ENCODE measurements at regions of chr13 and their contacts with region 1.

Region 1: GRCh38 chr13:41678249-41678648 is 220.9 kb downstream of the RGCC start:
- DNase-seq: no peak
- H3K4me3 Mint-ChIP-seq: no peak overlapping the region
- H3K27ac Mint-ChIP-seq: no peak overlapping the region
- H3K4me1 Mint-ChIP-seq: no peaks in the 10 kb centered on the region
- H3K27me3 Mint-ChIP-seq: no peaks in the 10 kb centered on the region

Region 2: DNA sequence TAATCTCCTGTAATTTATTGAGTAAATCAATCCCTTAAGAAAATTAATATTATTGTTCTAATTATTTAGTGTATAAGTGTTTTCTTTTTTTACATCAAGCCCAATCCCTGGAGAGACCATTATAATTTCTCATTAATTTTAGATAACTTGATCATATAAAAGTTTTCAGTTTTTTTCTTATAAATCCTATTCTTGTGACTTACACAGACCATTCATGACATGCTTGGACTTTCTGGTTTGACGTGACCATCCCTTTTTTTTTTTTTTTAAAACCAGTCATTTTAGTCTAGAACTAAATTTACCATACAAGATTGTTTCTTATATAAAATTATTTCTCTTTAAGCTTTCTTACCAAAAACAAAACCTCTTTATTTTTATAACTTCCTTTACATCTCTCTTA is 409.5 kb before region 1 on chr13:
- CTCF ChIA-PET with region 1: no interaction called
- POLR2A ChIA-PET with region 1: no interaction called
- DNase-seq: peak; percentile 50
- H3K4me3 Mint-ChIP-seq: no peak overlapping the region
- H3K27ac Mint-ChIP-seq: no peak overlapping the region
- H3K4me1 Mint-ChIP-seq: peaks cover 14% of the 10 kb centered on the region
- H3K27me3 Mint-ChIP-seq: no peaks in the 10 kb centered on the region

Region 3: DNA sequence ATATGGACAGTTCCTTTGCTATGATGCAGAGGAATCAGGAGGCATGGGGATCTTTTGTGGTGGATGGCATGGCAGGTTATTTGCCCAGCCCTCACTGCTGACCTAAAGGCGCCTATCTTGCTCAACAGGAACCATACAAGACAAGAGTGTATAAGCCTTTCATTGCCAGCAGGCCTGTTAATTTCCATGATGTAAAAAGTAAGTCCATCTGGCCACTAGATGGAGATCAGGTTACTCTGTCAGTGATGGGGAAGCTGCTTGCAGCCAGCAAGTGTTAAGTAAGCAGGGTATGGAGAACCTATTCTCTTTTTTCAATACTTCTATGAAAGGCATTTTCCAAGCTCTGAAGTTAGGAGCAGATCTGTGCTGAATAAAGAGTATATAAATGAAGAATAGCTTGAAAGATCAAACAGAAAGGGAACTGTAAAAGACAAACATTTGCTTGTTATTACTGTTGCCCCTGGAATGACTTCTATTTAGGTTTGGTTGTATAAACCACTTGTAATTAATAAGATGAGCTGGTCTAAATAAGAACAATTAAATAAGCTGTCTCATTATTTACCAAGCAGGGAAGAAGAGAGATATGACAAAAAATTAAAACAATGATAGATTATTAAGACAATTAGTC is 10.0 kb before region 1 on chr13:
- CTCF ChIA-PET with region 1: interaction called, 10 read pairs
- POLR2A ChIA-PET with region 1: no interaction called
- DNase-seq: peak; percentile 66
- H3K4me3 Mint-ChIP-seq: no peak overlapping the region
- H3K27ac Mint-ChIP-seq: no peak overlapping the region
- H3K4me1 Mint-ChIP-seq: no peaks in the 10 kb centered on the region
- H3K27me3 Mint-ChIP-seq: no peaks in the 10 kb centered on the region

Region 4: DNA sequence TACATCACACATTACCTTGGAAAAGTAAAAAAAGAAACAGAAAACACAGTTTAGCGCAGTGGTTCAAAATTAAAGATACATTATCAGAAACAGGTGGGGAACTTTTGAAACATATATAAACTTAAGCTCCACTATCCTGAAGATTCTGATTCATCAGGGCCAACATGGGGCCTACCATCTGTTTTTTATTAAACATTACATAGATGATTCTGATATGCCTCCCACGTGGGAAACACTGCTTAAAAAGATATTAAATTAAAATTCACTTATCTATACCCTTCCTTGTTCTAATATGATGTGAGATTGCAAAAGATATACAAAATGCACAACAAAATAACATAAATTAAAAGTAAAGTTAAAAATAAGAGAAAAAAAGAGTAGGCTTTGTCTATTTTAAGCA is 157.6 kb after region 1 on chr13:
- CTCF ChIA-PET with region 1: no interaction called
- POLR2A ChIA-PET with region 1: no interaction called
- DNase-seq: no peak
- H3K4me3 Mint-ChIP-seq: no peak overlapping the region
- H3K27ac Mint-ChIP-seq: no peak overlapping the region
- H3K4me1 Mint-ChIP-seq: no peaks in the 10 kb centered on the region
- H3K27me3 Mint-ChIP-seq: no peaks in the 10 kb centered on the region

Measured in activated CD4-positive, alpha-beta T cell treated with anti-CD3 and anti-CD28 coated beads, Interleukin-2, amount 10 ng/mL, durations not matched to agents 7 days and 5 days (primary cell).